PC-9 (cell line): ENCODE measurements at regions of chr12 and their contacts with region 1.

Region 1: GRCh38 chr12:84551373-84551772 is 361.2 kb downstream of the SLC6A15 start:
- DNase-seq: no peak
- H3K4me3 ChIP-seq: no peak overlapping the region
- H3K27ac ChIP-seq: no peak overlapping the region
- H3K4me1 ChIP-seq: no peaks in the 10 kb centered on the region
- H3K27me3 ChIP-seq: no peaks in the 10 kb centered on the region
- CTCF ChIP-seq: no peak

Region 2: DNA sequence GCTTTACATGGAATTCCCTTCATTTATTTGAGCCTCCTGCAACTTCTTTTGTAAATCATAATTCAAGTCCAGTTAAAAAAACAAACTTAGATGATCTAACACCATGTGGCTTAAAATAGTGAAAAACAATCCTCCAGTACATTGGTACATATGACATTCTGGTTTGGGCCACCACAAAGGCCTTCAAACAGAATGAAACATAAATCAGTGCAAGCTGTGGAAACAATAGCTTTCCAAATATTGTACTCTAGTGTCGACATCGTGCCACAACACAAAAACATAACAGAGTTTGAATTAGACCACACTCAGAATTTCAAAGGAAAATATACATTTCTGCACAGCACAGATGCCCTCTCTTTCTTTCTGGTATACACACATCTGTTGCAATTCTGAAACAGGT is 390.1 kb before region 1 on chr12:
- CTCF ChIA-PET with region 1: no interaction called
- POLR2A ChIA-PET with region 1: no interaction called
- intact Hi-C with region 1: no loop called
- DNase-seq: no peak
- H3K4me3 ChIP-seq: no peak overlapping the region
- H3K27ac ChIP-seq: no peak overlapping the region
- H3K4me1 ChIP-seq: no peaks in the 10 kb centered on the region
- H3K27me3 ChIP-seq: no peaks in the 10 kb centered on the region
- CTCF ChIP-seq: no peak

Region 3: GRCh38 chr12:84348582-84348981 is 202.8 kb before region 1 on chr12:
- CTCF ChIA-PET with region 1: no interaction called
- POLR2A ChIA-PET with region 1: no interaction called
- intact Hi-C with region 1: no loop called
- DNase-seq: no peak
- H3K4me3 ChIP-seq: no peak overlapping the region
- H3K27ac ChIP-seq: no peak overlapping the region
- H3K4me1 ChIP-seq: no peaks in the 10 kb centered on the region
- H3K27me3 ChIP-seq: no peaks in the 10 kb centered on the region
- CTCF ChIP-seq: no peak

Region 4: GRCh38 chr12:84599539-84599938 is 48.2 kb after region 1 on chr12:
- CTCF ChIA-PET with region 1: no interaction called
- POLR2A ChIA-PET with region 1: no interaction called
- intact Hi-C with region 1: loop called (anchors 5 kb)
- DNase-seq: peak; percentile 1 to 54
- H3K4me3 ChIP-seq: no peak overlapping the region
- H3K27ac ChIP-seq: no peak overlapping the region
- H3K4me1 ChIP-seq: no peaks in the 10 kb centered on the region
- H3K27me3 ChIP-seq: no peaks in the 10 kb centered on the region
- CTCF ChIP-seq: no peak

Region 5: DNA sequence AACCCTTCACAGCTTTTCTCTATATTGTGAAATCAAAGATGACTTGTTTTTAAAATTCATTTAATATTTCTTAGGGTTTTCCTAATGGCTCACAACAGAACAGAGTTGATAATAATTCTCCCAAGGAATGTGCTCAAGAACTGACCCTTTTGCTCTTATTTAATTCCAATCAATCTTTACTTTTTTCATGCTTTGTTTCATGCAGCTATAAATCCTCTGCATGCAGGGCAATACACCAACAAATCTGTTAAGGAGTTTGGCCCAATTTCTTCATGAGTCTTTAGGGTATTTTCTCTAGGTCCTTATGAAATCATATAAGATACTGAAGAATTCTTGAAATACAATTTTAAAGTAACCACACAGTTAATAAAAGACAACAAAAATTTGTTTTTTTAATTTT is 97.1 kb after region 1 on chr12:
- CTCF ChIA-PET with region 1: no interaction called
- POLR2A ChIA-PET with region 1: no interaction called
- intact Hi-C with region 1: no loop called
- DNase-seq: no peak
- H3K4me3 ChIP-seq: no peak overlapping the region
- H3K27ac ChIP-seq: no peak overlapping the region
- H3K4me1 ChIP-seq: no peaks in the 10 kb centered on the region
- H3K27me3 ChIP-seq: no peaks in the 10 kb centered on the region
- CTCF ChIP-seq: no peak